ENCODE measurements at regions of chr14 and their contacts with region 1.

Region 1: GRCh38 chr14:42911396-42912041 is 1304.8 kb downstream of the LRFN5 start:
- DNase-seq: peak; percentile 39
- ATAC-seq: peak; percentile 98
- H3K4me3 ChIP-seq: no peak overlapping the region
- H3K27ac ChIP-seq: no peak overlapping the region
- H3K4me1 ChIP-seq: no peaks in the 10 kb centered on the region
- H3K27me3 ChIP-seq: no peaks in the 10 kb centered on the region
- CTCF ChIP-seq: peak; percentile 54

Region 2: DNA sequence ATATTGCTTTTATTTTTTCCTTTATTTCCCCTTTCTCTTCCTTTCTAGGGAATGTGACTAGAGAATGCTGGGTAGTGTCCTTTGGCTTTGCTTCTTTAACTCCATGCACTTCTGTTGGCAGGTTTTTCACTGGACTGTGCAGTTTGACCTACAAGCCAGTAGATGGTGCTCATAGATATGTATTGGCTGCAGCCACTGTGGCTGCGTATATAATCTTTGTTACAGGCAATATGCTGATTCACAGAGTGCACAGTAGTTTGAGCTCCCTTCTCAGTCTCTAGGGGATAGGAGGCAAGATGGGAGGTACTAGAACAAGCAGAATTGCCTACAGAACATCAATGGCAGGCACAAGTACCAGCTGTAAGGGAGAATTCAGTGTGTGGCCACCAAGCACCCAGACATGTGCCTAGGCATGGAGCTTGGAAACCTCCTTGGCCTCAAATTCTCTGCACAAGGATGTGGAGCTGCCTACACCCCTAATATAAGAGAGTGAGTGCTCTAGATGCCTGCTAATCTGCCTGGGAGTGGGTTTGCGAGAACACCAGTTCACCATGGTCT is 801.3 kb before region 1 on chr14:
- CTCF ChIA-PET with region 1: no interaction called
- POLR2A ChIA-PET with region 1: no interaction called
- intact Hi-C with region 1: loop called (anchors 10 kb)
- DNase-seq: peak; percentile 85
- ATAC-seq: peak; percentile 78
- H3K4me3 ChIP-seq: no peak overlapping the region
- H3K27ac ChIP-seq: no peak overlapping the region
- H3K4me1 ChIP-seq: peaks cover 17% of the 10 kb centered on the region
- H3K27me3 ChIP-seq: no peaks in the 10 kb centered on the region
- CTCF ChIP-seq: peak; percentile 95

Region 3: GRCh38 chr14:42947991-42948390 is 36.5 kb after region 1 on chr14:
- CTCF ChIA-PET with region 1: no interaction called
- POLR2A ChIA-PET with region 1: no interaction called
- intact Hi-C with region 1: no loop called
- DNase-seq: no peak
- ATAC-seq: no peak
- H3K4me3 ChIP-seq: no peak overlapping the region
- H3K27ac ChIP-seq: no peak overlapping the region
- H3K4me1 ChIP-seq: peaks cover 14% of the 10 kb centered on the region
- H3K27me3 ChIP-seq: no peaks in the 10 kb centered on the region
- CTCF ChIP-seq: no peak

Region 4: DNA sequence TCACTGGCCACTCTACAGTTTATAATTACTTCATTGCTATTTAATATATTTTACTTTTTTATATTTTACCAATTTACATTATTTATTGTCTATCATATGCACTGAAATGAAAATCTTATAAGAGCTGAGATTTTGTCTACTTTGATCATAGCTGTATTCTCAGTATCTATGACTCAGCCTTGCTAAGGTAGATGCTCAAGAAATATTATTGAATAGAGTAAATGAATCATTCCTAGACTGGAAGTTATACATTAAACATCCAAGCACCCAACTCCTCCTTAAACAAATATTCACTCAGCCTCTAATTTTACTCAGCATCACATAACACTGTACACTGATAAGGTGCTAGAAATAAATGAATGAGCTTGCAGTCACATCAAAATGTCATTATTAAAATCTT is 120.0 kb after region 1 on chr14:
- CTCF ChIA-PET with region 1: no interaction called
- POLR2A ChIA-PET with region 1: no interaction called
- intact Hi-C with region 1: no loop called
- DNase-seq: peak; percentile 50
- ATAC-seq: peak; percentile 90
- H3K4me3 ChIP-seq: no peak overlapping the region
- H3K27ac ChIP-seq: no peak overlapping the region
- H3K4me1 ChIP-seq: 0 out of 2 replicates have a peak, but pooled peaks cover 3% of the 10 kb centered on the region
- H3K27me3 ChIP-seq: no peaks in the 10 kb centered on the region
- CTCF ChIP-seq: no peak

Region 5: DNA sequence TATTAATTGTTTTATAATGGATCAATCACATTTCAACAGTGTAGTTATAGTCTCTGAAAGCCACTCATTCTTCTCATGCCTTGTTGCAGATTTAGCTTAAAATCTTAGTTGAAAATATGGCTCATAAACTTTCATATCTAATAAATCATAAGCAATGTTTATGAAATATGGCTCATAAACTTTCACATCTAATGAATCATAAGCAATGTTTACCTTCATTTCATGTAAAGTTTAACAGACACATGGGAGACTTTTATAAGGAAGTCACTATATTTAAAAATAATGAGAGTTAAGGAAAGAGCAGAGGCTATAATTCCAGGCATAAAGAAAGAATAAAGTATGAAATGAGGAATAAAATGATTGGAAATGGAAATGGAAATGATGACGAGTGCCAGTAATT is 553.4 kb after region 1 on chr14:
- CTCF ChIA-PET with region 1: no interaction called
- POLR2A ChIA-PET with region 1: no interaction called
- intact Hi-C with region 1: loop called (anchors 10 kb)
- DNase-seq: peak; percentile 72
- ATAC-seq: peak; percentile 93
- H3K4me3 ChIP-seq: no peak overlapping the region
- H3K27ac ChIP-seq: no peak overlapping the region
- H3K4me1 ChIP-seq: peaks cover 13% of the 10 kb centered on the region
- H3K27me3 ChIP-seq: no peaks in the 10 kb centered on the region
- CTCF ChIP-seq: no peak

Region 6: GRCh38 chr14:43503590-43503907 is 592.0 kb after region 1 on chr14:
- CTCF ChIA-PET with region 1: no interaction called
- POLR2A ChIA-PET with region 1: no interaction called
- intact Hi-C with region 1: loop called (anchors 2 kb)
- DNase-seq: peak; percentile 45
- ATAC-seq: peak; percentile 92
- H3K4me3 ChIP-seq: no peak overlapping the region
- H3K27ac ChIP-seq: no peak overlapping the region
- H3K4me1 ChIP-seq: no peaks in the 10 kb centered on the region
- H3K27me3 ChIP-seq: no peaks in the 10 kb centered on the region
- CTCF ChIP-seq: peak; percentile 61

Region 7: DNA sequence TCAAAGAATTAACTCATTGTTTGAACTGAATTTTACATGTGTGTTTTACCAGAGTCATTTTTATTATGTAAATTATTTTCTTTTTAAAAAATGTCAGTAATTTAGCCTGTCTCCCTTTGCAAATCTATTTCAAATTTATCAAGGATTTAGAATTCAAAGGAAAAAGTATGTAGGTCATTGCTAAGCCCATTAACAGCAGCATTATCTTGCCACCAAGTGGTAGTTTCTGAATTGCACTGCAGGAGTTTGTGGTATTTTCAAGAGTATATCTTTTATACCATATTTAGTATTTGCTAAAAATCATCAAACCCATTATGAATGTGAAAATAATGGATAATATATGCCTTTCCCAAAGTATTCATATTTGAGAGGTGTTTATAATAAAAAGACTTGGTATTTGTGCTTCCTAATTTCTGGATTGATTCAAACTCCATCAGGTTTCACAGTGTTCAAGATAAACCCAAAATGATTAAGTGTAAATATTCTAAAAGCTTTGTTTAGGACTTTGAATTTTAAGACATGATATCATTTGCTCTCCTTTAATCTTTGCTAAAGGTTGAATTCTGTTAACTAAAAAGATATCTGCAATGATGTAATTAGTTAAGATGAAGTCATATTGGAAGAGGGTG is 884.2 kb after region 1 on chr14:
- CTCF ChIA-PET with region 1: no interaction called
- POLR2A ChIA-PET with region 1: no interaction called
- intact Hi-C with region 1: loop called (anchors 5 kb)
- DNase-seq: peak; percentile 51
- ATAC-seq: peak; percentile 73
- H3K4me3 ChIP-seq: no peak overlapping the region
- H3K27ac ChIP-seq: no peak overlapping the region
- H3K4me1 ChIP-seq: no peaks in the 10 kb centered on the region
- H3K27me3 ChIP-seq: no peaks in the 10 kb centered on the region
- CTCF ChIP-seq: peak; percentile 63

Region 8: DNA sequence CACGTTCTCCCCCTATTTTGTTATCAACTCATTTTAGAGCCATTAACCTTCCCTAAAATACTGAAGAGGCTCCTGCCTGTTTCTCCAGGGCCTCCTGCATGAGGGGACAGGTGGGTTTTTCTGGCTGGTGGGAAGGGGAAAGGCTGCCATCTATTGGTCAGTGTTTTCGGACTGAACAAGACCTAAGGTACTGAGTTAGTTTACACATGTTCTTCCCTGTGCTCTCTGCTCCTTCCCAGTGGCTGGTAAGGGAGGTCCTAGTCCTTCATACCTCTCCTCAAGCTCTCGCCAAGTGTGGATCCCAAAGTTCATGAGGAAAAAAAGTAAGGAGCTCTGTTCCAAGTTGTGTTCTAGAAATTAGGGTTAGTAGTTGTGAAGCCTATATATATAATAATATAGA is 1238.1 kb after region 1 on chr14:
- CTCF ChIA-PET with region 1: no interaction called
- POLR2A ChIA-PET with region 1: no interaction called
- intact Hi-C with region 1: loop called (anchors 10 kb)
- DNase-seq: peak; percentile 66
- ATAC-seq: peak; percentile 98
- H3K4me3 ChIP-seq: no peak overlapping the region
- H3K27ac ChIP-seq: no peak overlapping the region
- H3K4me1 ChIP-seq: no peaks in the 10 kb centered on the region
- H3K27me3 ChIP-seq: no peaks in the 10 kb centered on the region
- CTCF ChIP-seq: peak; percentile 76

Region 9: GRCh38 chr14:44803239-44803905 is 1891.9 kb after region 1 on chr14:
- CTCF ChIA-PET with region 1: no interaction called
- POLR2A ChIA-PET with region 1: no interaction called
- intact Hi-C with region 1: loop called (anchors 5 kb)
- DNase-seq: peak; percentile 77
- ATAC-seq: peak; percentile 95
- H3K4me3 ChIP-seq: no peak overlapping the region
- H3K27ac ChIP-seq: no peak overlapping the region
- H3K4me1 ChIP-seq: no peaks in the 10 kb centered on the region
- H3K27me3 ChIP-seq: no peaks in the 10 kb centered on the region
- CTCF ChIP-seq: peak; percentile 90